Calu3 (cell line): ENCODE measurements at regions of chr1 and their contacts with region 1.

Region 1: GRCh38 chr1:15152318-15153183 is 996 bp upstream of the TMEM51 start:
- DNase-seq: peak; percentile 80
- H3K4me3 Mint-ChIP-seq: peak overlapping the region; percentile 77
- H3K27ac Mint-ChIP-seq: peak overlapping the region; percentile 42
- H3K4me1 Mint-ChIP-seq: peaks cover 45% of the 10 kb centered on the region
- H3K27me3 Mint-ChIP-seq: no peaks in the 10 kb centered on the region
- CTCF ChIP-seq: peak; percentile 41

Region 2: DNA sequence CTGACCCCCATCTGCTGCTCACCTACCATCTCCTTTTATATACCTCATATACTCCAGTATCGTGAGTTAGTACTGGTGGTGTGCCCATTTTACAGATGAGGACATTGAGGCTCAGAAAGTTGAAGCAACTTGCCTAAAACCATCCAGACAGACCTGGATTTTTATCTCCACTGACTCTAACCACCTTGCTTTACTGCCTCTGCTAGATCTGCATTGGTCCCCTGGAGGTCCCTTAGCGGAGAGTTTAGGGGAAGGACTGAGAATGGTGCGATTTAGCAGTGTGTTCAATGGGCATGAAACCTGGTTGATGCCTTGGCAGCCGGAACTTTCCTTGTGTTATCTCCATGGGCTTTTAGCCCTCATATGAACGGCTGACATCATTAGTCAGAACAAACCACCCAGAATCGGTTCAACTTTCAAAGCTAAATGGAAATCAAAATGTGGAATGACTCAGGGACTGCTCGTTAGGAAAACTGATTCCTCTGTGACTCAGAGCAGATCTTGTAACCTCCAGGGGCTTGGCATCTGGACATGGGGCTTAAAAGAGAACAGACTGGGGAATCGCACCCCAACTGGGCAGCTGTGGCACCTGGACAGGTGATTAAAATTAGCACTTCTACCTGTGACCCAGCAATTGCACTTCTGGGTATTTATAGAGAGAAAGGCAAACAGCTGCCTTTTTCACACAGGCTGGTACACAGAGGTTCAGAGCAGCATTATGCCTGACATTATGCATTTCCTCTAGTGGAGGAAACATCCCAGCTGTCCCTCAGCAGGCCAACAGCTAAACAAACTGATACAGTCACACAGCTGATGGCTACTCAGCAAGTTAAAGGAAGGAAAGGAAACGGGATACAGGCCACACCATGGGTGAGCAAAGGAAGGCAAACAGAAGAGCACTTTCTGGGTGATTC is 26.3 kb after region 1 on chr1:
- CTCF ChIA-PET with region 1: no interaction called
- intact Hi-C with region 1: loop called (anchors 2 kb)
- DNase-seq: peak; percentile 43
- H3K4me3 Mint-ChIP-seq: peak overlapping the region; percentile 39
- H3K27ac Mint-ChIP-seq: peak overlapping the region; percentile 89
- H3K4me1 Mint-ChIP-seq: peaks cover 71% of the 10 kb centered on the region
- H3K27me3 Mint-ChIP-seq: no peaks in the 10 kb centered on the region
- CTCF ChIP-seq: no peak

Region 3: DNA sequence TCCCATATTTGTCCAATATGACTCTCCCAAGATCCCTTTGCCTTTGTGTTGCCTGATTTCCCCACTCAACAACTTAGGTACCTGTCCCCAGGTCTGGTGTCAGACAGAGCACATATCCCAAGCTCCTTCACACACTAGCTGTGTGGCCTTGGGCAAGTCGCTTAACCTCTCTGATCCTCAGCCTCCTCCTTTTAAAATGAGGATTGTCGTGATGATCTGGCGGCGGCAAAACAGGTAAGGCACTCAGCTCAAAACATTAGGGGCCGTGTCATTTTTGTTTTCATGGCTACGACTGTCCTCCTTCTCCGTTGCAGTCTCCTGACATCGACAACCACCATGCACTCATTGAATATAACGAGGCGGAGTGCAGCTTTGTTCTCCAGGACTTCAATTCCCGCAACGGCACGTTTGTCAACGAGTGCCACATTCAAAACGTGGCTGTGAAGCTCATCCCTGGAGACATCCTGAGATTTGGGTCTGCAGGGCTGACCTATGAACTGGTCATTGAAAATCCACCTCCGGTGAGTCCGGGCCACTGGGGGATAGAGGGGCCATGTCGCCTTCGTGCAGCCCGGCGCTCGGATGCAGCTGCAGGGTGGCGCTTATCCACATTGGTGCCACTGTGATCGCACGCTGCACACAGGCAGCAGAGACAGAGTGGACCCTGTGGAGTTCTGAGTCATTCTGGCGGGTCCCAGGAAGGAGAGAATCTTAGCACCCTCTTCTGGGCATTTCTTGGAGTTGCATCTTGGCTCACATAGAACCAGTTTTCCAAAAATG is 119.6 kb after region 1 on chr1:
- CTCF ChIA-PET with region 1: no interaction called
- intact Hi-C with region 1: loop called (anchors 2 kb)
- DNase-seq: peak; percentile 60
- H3K4me3 Mint-ChIP-seq: no peak overlapping the region
- H3K27ac Mint-ChIP-seq: no peak overlapping the region
- H3K4me1 Mint-ChIP-seq: no peaks in the 10 kb centered on the region
- H3K27me3 Mint-ChIP-seq: no peaks in the 10 kb centered on the region
- CTCF ChIP-seq: peak; percentile 65